CD4-positive, alpha-beta memory T cell (primary cell): ENCODE measurements at regions of chr16 and their contacts with region 1.

Region 1: GRCh38 chr16:1342526-1343427 is 8.9 kb downstream of the TSR3 start:
- DNase-seq: peak; percentile 93 to 99 (median 96)
- H3K4me3 ChIP-seq: peak overlapping the region in 1 of 2 donors; percentile 63
- H3K4me3 Mint-ChIP-seq: peak overlapping the region; percentile 66 to 83 (median 79)
- H3K27ac ChIP-seq: peak overlapping the region; percentile 15
- H3K27ac Mint-ChIP-seq: peak overlapping the region; percentile 7 to 85 (median 59)
- H3K4me1 ChIP-seq: peaks cover 19% of the 10 kb centered on the region
- H3K4me1 Mint-ChIP-seq: peaks cover 6 to 22% (median 15%) of the 10 kb centered on the region in 4 donors
- H3K27me3 ChIP-seq: no peaks in the 10 kb centered on the region
- H3K27me3 Mint-ChIP-seq: no peaks in the 10 kb centered on the region

Region 2: GRCh38 chr16:1331712-1332617 is 10.8 kb before region 1 on chr16:
- CTCF ChIA-PET with region 1: interaction called, 7 read pairs
- POLR2A ChIA-PET with region 1: interaction called, 14 read pairs
- intact Hi-C with region 1: loop called (anchors 1 kb)
- DNase-seq: peak; percentile 43 to 77 (median 52)
- H3K4me3 ChIP-seq: peak overlapping the region; percentile 15 to 24
- H3K4me3 Mint-ChIP-seq: peak overlapping the region; percentile 74 to 90 (median 82)
- H3K27ac ChIP-seq: peak overlapping the region; percentile 24
- H3K27ac Mint-ChIP-seq: peak overlapping the region; percentile 68 to 90 (median 78)
- H3K4me1 ChIP-seq: peaks cover 33% of the 10 kb centered on the region
- H3K4me1 Mint-ChIP-seq: peaks cover 7 to 26% (median 16%) of the 10 kb centered on the region in 4 donors
- H3K27me3 ChIP-seq: peaks cover 17% of the 10 kb centered on the region
- H3K27me3 Mint-ChIP-seq: peaks cover 3 to 6% of the 10 kb centered on the region in 2 donors